GM10248 (cell line): ENCODE measurements at regions of chr2 and their contacts with region 1.

Region 1: DNA sequence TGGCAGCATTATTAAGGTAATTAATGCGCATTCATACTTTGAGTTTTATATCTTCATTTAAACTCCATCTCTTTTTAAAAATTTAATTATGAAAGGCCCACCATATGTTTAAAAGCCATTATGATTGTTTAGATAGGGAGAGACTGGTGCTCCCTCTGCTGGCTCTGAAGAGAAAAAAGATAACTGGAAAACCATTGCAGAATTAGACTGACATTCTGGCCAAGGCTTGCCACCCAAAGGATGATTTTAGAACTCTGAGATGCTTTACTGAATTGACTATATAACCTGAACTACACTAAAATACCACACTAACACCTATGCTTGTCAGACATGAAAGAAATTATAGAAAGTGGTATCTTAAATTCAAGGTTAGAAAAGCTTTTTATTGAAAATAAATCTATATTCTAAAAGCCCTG is 127.6 kb upstream of the SPOPL start:
- DNase-seq: peak; percentile 16
- CTCF ChIP-seq: peak; percentile 57

Region 2: GRCh38 chr2:138356178-138356577 is 17.8 kb before region 1 on chr2:
- CTCF ChIA-PET with region 1: interaction called, 14 read pairs
- POLR2A ChIA-PET with region 1: no interaction called
- DNase-seq: no peak
- CTCF ChIP-seq: no peak

Region 3: GRCh38 chr2:138390316-138390945 is 16.4 kb after region 1 on chr2:
- CTCF ChIA-PET with region 1: interaction called, 12 read pairs
- POLR2A ChIA-PET with region 1: no interaction called
- DNase-seq: no peak
- CTCF ChIP-seq: no peak